Heart left ventricle (tissue), 16 donors: ENCODE measurements at regions of chr21 and their contacts with region 1.

Region 1: DNA sequence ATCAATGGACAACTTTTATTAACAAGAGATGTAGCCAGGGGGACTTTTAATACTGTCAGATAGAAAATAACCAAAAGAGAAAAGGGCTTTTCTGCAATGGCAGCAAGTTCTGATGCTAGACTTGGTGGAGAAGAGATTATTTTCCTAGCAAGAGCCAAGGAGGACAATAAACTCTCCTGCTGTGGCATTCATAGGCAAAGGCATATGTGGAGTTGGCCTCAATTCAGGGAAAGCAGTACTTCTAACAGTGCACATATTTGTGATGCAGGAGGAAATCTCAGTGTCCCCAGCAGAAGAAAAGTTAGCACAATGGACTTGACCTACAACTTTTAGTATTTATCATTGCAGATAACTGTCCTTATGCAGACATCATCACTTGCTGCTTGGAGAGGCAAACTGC is 75.1 kb upstream of the GRIK1 start:
- DNase-seq: no peak
- ATAC-seq: no peak
- H3K4me3 ChIP-seq: no peak overlapping the region
- H3K27ac ChIP-seq: no peak overlapping the region
- H3K4me1 ChIP-seq: no peaks in the 10 kb centered on the region
- H3K27me3 ChIP-seq: no peaks in the 10 kb centered on the region
- CTCF ChIP-seq: no peak
- POLR2A ChIP-seq: no peak

Region 2: GRCh38 chr21:29737186-29737585 is 277.7 kb before region 1 on chr21:
- intact Hi-C with region 1: loop called in 1 of 10 experiments (anchors 5 kb)
- DNase-seq: no peak
- ATAC-seq: no peak
- H3K4me3 ChIP-seq: no peak overlapping the region
- H3K27ac ChIP-seq: no peak overlapping the region
- H3K4me1 ChIP-seq: peaks cover 0 to 6% (median 0%) of the 10 kb centered on the region in 12 donors
- H3K27me3 ChIP-seq: no peaks in the 10 kb centered on the region
- CTCF ChIP-seq: no peak
- POLR2A ChIP-seq: no peak

Region 3: GRCh38 chr21:29904359-29905282 is 110.3 kb before region 1 on chr21:
- intact Hi-C with region 1: no loop called
- DNase-seq: no peak
- ATAC-seq: peak in 1 of 4 donors; percentile 24
- H3K4me3 ChIP-seq: no peak overlapping the region
- H3K27ac ChIP-seq: no peak overlapping the region
- H3K4me1 ChIP-seq: no peaks in the 10 kb centered on the region
- H3K27me3 ChIP-seq: no peaks in the 10 kb centered on the region
- CTCF ChIP-seq: no peak
- POLR2A ChIP-seq: no peak